ENCODE measurements at regions of chr3 and their contacts with region 1.

Region 1: GRCh38 chr3:61966200-61966599 is 404.8 kb downstream of the PTPRG start:
- DNase-seq: peak; percentile 83
- H3K4me3 ChIP-seq: no peak overlapping the region
- H3K27ac ChIP-seq: no peak overlapping the region
- H3K4me1 ChIP-seq: peaks cover 29% of the 10 kb centered on the region
- H3K27me3 ChIP-seq: no peaks in the 10 kb centered on the region
- CTCF ChIP-seq: no peak

Region 2: DNA sequence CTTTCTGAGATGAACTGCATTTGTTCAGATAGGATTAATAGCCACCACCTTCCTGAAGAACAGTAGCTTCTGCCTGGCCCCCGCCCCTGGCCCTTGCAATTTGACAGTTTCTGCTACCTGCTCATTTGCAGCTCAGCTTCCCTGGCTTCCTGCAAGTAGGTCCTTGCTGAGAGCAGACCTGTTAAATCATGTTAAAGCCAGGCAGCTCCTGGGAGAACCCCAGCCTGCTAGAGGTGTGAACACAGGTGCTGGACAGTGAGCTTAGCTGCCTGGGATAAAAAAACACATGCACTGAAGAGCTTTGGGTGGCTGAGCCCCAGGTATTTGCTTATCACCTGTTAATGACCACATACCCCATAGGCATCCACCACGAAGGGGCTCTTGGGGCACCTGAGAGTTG is 261.4 kb before region 1 on chr3:
- CTCF ChIA-PET with region 1: no interaction called
- dilution Hi-C with region 1: no loop called
- in situ Hi-C with region 1: no loop called
- intact Hi-C with region 1: loop called (anchors 10 kb)
- DNase-seq: peak; percentile 16
- H3K4me3 ChIP-seq: no peak overlapping the region
- H3K27ac ChIP-seq: no peak overlapping the region
- H3K4me1 ChIP-seq: peaks cover 28% of the 10 kb centered on the region
- H3K27me3 ChIP-seq: no peaks in the 10 kb centered on the region
- CTCF ChIP-seq: no peak

Region 3: GRCh38 chr3:61996374-61996773 is 30.2 kb after region 1 on chr3:
- CTCF ChIA-PET with region 1: no interaction called
- dilution Hi-C with region 1: no loop called
- in situ Hi-C with region 1: no loop called
- intact Hi-C with region 1: no loop called
- DNase-seq: peak; percentile 20
- H3K4me3 ChIP-seq: no peak overlapping the region
- H3K27ac ChIP-seq: no peak overlapping the region
- H3K4me1 ChIP-seq: no peaks in the 10 kb centered on the region
- H3K27me3 ChIP-seq: no peaks in the 10 kb centered on the region
- CTCF ChIP-seq: no peak

Region 4: GRCh38 chr3:62007036-62007818 is 41.0 kb after region 1 on chr3:
- CTCF ChIA-PET with region 1: no interaction called
- dilution Hi-C with region 1: no loop called
- in situ Hi-C with region 1: no loop called
- intact Hi-C with region 1: no loop called
- DNase-seq: no peak
- H3K4me3 ChIP-seq: no peak overlapping the region
- H3K27ac ChIP-seq: no peak overlapping the region
- H3K4me1 ChIP-seq: no peaks in the 10 kb centered on the region
- H3K27me3 ChIP-seq: no peaks in the 10 kb centered on the region
- CTCF ChIP-seq: no peak

Measured in mammary epithelial cell (primary cell).